MCF 10A (cell line): ENCODE measurements at regions of chr20 and their contacts with region 1.

Region 1: GRCh38 chr20:52312132-52312729 is 120.7 kb upstream of the ZFP64 start:
- DNase-seq: peak; percentile 67
- H3K4me3 Mint-ChIP-seq: no peak overlapping the region
- H3K27ac Mint-ChIP-seq: no peak overlapping the region
- H3K4me1 Mint-ChIP-seq: peaks cover 6% of the 10 kb centered on the region
- H3K27me3 Mint-ChIP-seq: peaks cover 25% of the 10 kb centered on the region
- CTCF ChIP-seq: peak; percentile 60

Region 2: DNA sequence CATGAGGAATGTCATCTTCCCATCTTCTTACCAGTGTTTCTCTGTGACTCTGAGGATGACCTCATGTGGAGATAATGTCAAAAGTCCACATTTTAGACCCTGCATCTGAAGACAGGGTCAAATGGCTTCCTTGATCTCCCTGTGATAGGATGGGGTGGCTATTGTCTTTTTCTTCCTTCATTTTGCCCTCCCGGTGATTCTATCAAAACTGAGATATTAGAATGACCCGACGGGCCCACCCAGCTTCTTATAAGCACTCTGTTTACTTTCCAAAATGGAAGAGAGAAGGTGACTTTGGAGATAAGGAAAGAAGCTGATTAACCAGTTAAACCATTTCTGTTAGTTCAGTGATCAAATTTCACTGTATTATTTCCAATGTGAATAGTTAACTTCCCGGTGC is 394.2 kb before region 1 on chr20:
- CTCF ChIA-PET with region 1: no interaction called
- POLR2A ChIA-PET with region 1: no interaction called
- intact Hi-C with region 1: no loop called
- DNase-seq: no peak
- H3K4me3 Mint-ChIP-seq: no peak overlapping the region
- H3K27ac Mint-ChIP-seq: no peak overlapping the region
- H3K4me1 Mint-ChIP-seq: no peaks in the 10 kb centered on the region
- H3K27me3 Mint-ChIP-seq: no peaks in the 10 kb centered on the region
- CTCF ChIP-seq: no peak

Region 3: GRCh38 chr20:52280407-52280806 is 31.8 kb before region 1 on chr20:
- CTCF ChIA-PET with region 1: interaction called, 11 read pairs
- POLR2A ChIA-PET with region 1: interaction called, 3 read pairs
- intact Hi-C with region 1: no loop called
- DNase-seq: no peak
- H3K4me3 Mint-ChIP-seq: no peak overlapping the region
- H3K27ac Mint-ChIP-seq: no peak overlapping the region
- H3K4me1 Mint-ChIP-seq: no peaks in the 10 kb centered on the region
- H3K27me3 Mint-ChIP-seq: peaks cover 51% of the 10 kb centered on the region
- CTCF ChIP-seq: no peak

Region 4: DNA sequence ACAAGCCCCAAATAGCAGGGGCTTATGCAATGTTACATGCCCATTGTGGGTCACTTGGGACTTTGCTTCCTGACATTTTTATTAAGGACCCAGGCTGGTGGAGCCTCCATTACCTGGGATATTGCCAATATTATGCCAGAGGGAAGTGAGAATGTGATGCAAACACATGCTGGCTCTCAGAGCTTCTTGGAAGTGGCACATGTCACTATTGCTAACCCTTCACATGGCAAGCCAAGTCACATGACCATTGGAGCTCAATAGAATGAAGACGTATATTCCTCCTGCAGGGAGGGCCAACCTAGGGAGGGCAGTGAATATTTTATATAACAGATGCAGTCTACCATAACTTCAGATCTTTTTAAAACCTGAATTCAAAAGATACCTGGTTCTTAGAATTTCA is 20.0 kb after region 1 on chr20:
- CTCF ChIA-PET with region 1: interaction called, 20 read pairs
- POLR2A ChIA-PET with region 1: no interaction called
- intact Hi-C with region 1: no loop called
- DNase-seq: no peak
- H3K4me3 Mint-ChIP-seq: no peak overlapping the region
- H3K27ac Mint-ChIP-seq: no peak overlapping the region
- H3K4me1 Mint-ChIP-seq: no peaks in the 10 kb centered on the region
- H3K27me3 Mint-ChIP-seq: peaks cover 11% of the 10 kb centered on the region
- CTCF ChIP-seq: no peak

Region 5: GRCh38 chr20:52379723-52380336 is 67.6 kb after region 1 on chr20:
- CTCF ChIA-PET with region 1: interaction called, 26 read pairs
- POLR2A ChIA-PET with region 1: no interaction called
- intact Hi-C with region 1: loop called (anchors 2 kb)
- DNase-seq: peak; percentile 36
- H3K4me3 Mint-ChIP-seq: no peak overlapping the region
- H3K27ac Mint-ChIP-seq: no peak overlapping the region
- H3K4me1 Mint-ChIP-seq: no peaks in the 10 kb centered on the region
- H3K27me3 Mint-ChIP-seq: peaks cover 21% of the 10 kb centered on the region
- CTCF ChIP-seq: peak; percentile 88

Region 6: GRCh38 chr20:53216856-53217576 is 904.8 kb after region 1 on chr20:
- CTCF ChIA-PET with region 1: interaction called, 85 read pairs
- POLR2A ChIA-PET with region 1: no interaction called
- intact Hi-C with region 1: loop called (anchors 2 kb)
- DNase-seq: peak; percentile 54
- H3K4me3 Mint-ChIP-seq: peak overlapping the region; percentile 30
- H3K27ac Mint-ChIP-seq: no peak overlapping the region
- H3K4me1 Mint-ChIP-seq: no peaks in the 10 kb centered on the region
- H3K27me3 Mint-ChIP-seq: no peaks in the 10 kb centered on the region
- CTCF ChIP-seq: peak; percentile 89

Region 7: DNA sequence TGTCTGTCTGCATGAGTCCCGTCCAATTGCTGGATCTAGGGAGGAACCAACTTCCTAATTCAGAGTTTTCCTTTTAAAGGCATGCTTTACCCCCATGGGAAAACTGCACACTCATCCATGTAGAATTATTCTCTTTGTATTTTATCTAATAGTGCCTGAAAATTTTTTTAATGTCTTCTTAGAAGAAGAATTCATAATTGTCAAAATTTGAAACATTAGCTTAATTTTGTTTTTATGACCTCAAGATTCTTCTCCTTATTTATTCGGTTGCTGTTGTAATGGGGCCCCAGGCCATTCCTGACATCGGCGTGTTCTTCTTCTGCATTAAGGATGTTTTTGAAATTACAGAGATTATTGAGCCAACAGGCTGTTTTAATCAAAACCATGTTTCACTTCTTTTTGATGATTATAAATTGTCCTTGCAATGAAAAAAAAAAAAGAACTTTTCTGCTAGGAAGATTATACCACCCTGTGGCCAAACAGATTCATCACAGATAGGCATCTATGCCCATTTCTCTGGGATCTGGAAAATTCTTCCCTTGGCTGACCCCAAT is 1181.2 kb after region 1 on chr20:
- CTCF ChIA-PET with region 1: interaction called, 12 read pairs
- POLR2A ChIA-PET with region 1: no interaction called
- intact Hi-C with region 1: no loop called
- DNase-seq: no peak
- H3K4me3 Mint-ChIP-seq: no peak overlapping the region
- H3K27ac Mint-ChIP-seq: no peak overlapping the region
- H3K4me1 Mint-ChIP-seq: peaks cover 4% of the 10 kb centered on the region
- H3K27me3 Mint-ChIP-seq: no peaks in the 10 kb centered on the region
- CTCF ChIP-seq: no peak

Region 8: DNA sequence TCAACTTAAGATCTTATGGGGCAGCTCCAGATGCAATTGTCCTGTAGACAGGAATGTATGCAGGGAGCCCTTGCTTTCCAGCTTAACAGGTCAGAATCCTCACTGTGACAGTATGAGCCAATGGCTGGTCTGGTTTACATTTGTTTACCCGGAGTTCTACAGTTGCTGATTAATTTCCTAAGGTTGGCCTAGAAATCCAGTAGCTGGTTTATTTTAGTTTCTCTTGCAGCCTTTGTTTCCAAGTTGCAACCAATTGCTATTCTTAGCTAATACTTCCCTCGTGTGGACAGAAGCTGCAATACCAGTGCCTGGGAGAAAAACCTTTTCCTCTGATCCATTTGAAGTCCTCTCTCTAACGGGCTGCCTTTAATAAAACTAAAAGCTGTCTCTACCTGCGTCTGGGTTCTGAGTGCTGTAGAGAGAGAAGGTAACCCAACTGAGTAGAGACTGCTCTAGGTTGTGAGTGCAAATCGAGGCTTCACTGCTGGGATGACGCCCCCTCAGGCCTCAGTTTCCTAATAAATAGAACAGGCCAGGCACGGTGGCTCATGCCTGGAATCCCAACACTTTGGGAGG is 1235.5 kb after region 1 on chr20:
- CTCF ChIA-PET with region 1: interaction called, 159 read pairs
- POLR2A ChIA-PET with region 1: interaction called, 7 read pairs
- intact Hi-C with region 1: loop called (anchors 1 kb)
- DNase-seq: peak; percentile 65
- H3K4me3 Mint-ChIP-seq: no peak overlapping the region
- H3K27ac Mint-ChIP-seq: no peak overlapping the region
- H3K4me1 Mint-ChIP-seq: no peaks in the 10 kb centered on the region
- H3K27me3 Mint-ChIP-seq: no peaks in the 10 kb centered on the region
- CTCF ChIP-seq: peak; percentile 91